AG04450 (cell line): ENCODE measurements at regions of chr19 and their contacts with region 1.

Region 1: GRCh38 chr19:10835754-10836477 is at the start of gene TMED1:
- DNase-seq: peak; percentile 97
- H3K4me3 ChIP-seq: peak within 1 kb of the TSS; percentile 77
- H3K27ac ChIP-seq: peak within 1 kb of the TSS; percentile 98
- H3K27me3 ChIP-seq: no peaks in the 10 kb centered on the region
- CTCF ChIP-seq: peak; percentile 27; the same call in 1 of the 2 replicates
- polyA plus RNA-seq, gene TMED1: 42.4 and 48.4 TPM in 2 replicates

Region 2: DNA sequence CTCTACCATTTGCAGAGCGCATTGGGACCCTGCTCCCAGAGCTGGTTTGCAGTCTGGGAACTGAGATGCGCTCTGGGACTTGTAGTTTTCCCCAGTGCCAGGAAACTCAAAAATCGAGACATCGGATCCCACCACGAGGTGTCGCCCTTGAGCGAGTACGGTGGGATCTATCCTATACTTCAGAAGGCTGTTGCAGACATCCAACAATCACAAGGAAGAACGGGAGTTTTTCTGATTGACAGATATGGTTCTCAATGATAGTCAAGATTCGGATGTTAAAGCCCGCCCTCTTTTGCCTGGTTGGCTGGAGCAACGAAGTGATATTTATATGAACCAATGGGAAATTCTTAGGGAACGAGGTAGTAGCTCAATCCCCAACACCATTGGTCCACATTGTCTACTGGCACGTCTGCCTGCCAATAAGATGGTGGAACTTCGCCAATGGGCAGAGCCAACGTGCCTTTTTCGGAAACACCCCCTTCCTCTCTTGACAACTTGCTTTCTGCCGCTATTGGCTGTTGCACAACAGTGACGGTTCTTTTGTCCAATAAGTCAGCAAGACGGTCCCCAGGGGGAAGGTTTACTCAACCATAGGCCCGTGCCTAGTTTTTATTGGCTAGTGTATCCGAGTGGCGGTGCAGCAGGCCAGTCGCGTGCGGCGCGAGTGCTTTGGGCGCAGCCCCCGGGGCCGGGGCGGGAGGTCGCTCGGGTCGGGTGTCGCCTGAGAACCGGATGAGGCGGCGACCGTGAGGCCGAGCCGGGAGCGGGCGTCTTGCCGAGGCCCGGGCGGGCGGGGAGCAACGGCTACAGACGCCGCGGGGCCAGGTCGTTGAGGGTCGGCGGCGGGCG is 118.3 kb before region 1 on chr19 and contains the start of gene DNM2:
- CTCF ChIA-PET with region 1: interaction called, 9 read pairs
- POLR2A ChIA-PET with region 1: interaction called, 10 read pairs
- DNase-seq: peak; percentile 100
- H3K4me3 ChIP-seq: peak within 1 kb of the TSS; percentile 92
- H3K27ac ChIP-seq: peak within 1 kb of the TSS; percentile 52
- H3K27me3 ChIP-seq: no peaks in the 10 kb centered on the region
- CTCF ChIP-seq: peak; percentile 82
- polyA plus RNA-seq, gene DNM2: 36.9 and 49.1 TPM in 2 replicates

Region 3: DNA sequence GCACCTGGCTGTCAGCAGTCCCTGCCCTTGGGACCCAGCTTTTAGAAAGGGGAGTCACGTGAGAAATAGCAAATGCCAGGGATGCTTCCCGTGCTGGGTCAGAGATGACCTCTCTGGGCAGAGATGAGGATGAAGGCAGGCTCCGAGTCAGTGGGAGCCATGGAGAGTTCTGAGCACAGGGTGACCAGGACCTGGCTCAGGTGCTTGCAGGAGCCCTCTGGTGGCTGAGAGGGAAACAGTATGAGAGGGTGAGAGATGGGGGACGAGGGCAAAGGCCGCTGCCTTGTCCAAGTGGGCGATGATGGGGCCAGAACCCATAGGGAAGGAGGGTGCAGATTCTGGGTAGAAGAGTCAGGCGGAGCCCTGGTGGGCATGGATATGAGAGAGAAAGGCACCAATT is 15.7 kb before region 1 on chr19:
- CTCF ChIA-PET with region 1: interaction called, 4 read pairs
- POLR2A ChIA-PET with region 1: interaction called, 27 read pairs
- DNase-seq: no peak
- H3K4me3 ChIP-seq: no peak overlapping the region
- H3K27ac ChIP-seq: no peak overlapping the region
- H3K27me3 ChIP-seq: no peaks in the 10 kb centered on the region
- CTCF ChIP-seq: peak; percentile 22; the same call in 1 of the 2 replicates

Region 4: DNA sequence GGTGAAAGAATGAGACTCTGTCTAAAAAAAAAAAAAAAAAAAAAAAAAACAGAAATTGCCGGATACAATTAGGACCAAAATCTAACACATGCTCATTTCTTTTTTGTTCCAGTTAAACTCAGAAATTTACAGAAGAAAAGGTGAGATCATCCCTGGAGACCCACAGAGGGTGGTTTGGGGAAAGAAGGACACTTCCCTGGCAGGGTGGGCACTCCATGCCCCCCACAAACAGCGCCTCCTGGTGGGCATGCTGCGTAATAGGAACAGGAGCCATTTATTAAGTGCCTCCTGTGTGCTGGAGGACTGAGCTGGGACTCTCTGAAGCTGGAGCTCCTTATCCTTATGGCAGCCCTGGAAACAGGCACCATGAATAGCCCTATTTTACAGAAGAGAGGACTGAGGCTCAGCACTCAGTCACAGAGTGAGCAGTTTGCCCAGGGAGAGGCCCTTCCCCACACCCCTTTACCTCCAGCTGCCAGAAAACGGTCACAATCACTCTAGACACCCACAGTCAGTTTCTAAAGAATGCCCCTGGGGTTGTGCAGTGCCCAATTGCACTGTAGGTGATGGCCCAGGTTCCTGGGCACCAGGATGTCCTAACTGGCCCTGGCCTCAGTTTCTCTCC is 22.4 kb after region 1 on chr19:
- CTCF ChIA-PET with region 1: interaction called, 38 read pairs
- POLR2A ChIA-PET with region 1: interaction called, 10 read pairs
- DNase-seq: no peak
- H3K4me3 ChIP-seq: no peak overlapping the region
- H3K27ac ChIP-seq: no peak overlapping the region
- H3K27me3 ChIP-seq: no peaks in the 10 kb centered on the region
- CTCF ChIP-seq: peak; percentile 86

Region 5: DNA sequence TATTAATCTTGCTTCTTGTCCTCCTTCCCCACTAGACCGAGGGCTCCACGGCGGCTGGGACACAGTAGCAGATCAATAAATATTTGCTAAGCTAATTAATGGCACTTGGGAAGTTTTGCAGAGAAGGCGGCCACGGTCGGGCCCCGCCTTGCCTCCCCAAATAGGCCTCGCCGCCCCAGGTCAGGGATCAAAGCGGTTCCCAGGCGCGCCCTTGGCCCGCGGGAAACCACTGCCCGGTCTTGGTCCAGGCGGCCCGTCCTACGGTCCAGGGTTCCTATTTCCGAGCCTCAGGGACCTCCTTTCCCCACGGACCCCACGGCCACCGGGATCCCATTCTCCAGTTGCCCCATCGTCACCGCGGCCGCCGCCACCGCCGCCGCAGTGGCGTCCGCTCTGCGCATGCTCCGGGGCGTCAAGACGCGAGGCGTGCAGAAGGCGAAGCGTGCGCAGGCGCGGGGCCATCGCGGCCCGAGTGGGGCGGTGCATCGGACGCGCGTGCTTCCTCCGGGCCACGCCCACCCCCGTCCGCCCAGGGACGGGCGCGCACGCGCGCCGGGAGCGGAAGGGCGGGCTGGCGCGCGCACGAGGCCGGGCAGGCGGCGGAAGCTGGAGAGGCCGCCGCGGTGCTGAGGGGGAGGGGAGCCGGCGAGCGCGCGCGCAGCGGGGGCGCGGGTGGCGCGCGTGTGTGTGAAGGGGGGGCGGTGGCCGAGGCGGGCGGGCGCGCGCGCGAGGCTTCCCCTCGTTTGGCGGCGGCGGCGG is 124.6 kb after region 1 on chr19 and contains the start of gene SMARCA4:
- CTCF ChIA-PET with region 1: no interaction called
- POLR2A ChIA-PET with region 1: interaction called, 10 read pairs
- DNase-seq: peak; percentile 87
- H3K4me3 ChIP-seq: peak within 1 kb of the TSS; percentile 86
- H3K27ac ChIP-seq: peak within 1 kb of the TSS; percentile 52
- H3K27me3 ChIP-seq: no peaks in the 10 kb centered on the region
- CTCF ChIP-seq: no peak
- polyA plus RNA-seq, gene SMARCA4: 41.6 and 63.5 TPM in 2 replicates

Region 6: GRCh38 chr19:11018179-11018578 is 182.3 kb after region 1 on chr19:
- CTCF ChIA-PET with region 1: no interaction called
- POLR2A ChIA-PET with region 1: no interaction called
- DNase-seq: no peak
- H3K4me3 ChIP-seq: no peak overlapping the region
- H3K27ac ChIP-seq: peak overlapping the region; percentile 11
- H3K27me3 ChIP-seq: no peaks in the 10 kb centered on the region
- CTCF ChIP-seq: no peak